Left ventricle myocardium superior (tissue), 1 donor: ENCODE measurements at regions of chr10 and their contacts with region 1.

Region 1: DNA sequence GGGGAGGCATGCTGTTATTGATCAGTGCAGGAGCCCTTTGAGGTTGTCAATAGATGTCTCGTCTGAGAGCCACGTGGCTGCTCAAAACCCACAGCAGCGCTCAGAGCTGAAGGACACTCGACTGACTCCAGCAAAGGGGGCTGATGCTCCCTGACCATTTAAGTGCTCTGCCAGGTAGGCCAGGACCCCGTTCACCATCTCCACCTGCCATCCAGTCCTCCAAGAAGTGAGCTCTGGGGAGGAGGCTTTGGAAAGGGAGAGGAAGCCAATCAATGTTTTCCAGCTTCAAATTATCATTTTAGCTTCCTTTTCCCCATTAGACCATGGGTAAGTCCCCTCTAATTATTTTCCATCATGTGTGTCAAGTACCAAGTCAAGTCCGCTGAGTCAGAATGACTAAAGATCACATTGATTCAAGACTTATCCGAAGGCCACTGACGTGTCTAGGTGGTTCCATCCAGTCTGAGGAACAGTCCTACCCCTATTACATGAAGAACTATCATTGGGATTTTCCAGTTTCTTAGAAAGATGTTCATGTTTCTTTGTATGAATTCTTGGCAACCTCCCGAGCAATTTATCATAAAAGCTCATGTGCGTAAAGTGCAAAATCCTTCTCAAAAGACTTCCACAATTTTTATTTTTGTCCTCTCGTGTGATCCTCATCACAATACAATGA is 302.6 kb upstream of the LYZL1 start:
- DNase-seq: no peak
- ATAC-seq: no peak

Region 2: GRCh38 chr10:28676968-28677887 is 309.0 kb before region 1 on chr10 and contains the start of gene BAMBI:
- intact Hi-C with region 1: loop called (anchors 5 kb)
- DNase-seq: peak; percentile 97
- ATAC-seq: peak; percentile 97
- total RNA-seq, gene BAMBI: 12.5 TPM